ENCODE measurements at regions of chr19 and their contacts with region 1.

Region 1: GRCh38 chr19:48637170-48637947 is at the start of gene DBP:
- DNase-seq: peak; percentile 100
- H3K4me3 Mint-ChIP-seq: peak within 1 kb of the TSS; percentile 86
- H3K27ac Mint-ChIP-seq: peak within 1 kb of the TSS; percentile 99
- H3K4me1 Mint-ChIP-seq: peaks cover 35% of the 10 kb centered on the region
- H3K27me3 Mint-ChIP-seq: peaks cover 2% of the 10 kb centered on the region
- total RNA-seq, gene DBP: 10.7 and 11.2 TPM in 2 replicates

Region 2: GRCh38 chr19:48333467-48334384 is 303.6 kb before region 1 on chr19:
- intact Hi-C with region 1: loop called (anchors 5 kb)
- DNase-seq: peak; percentile 98
- H3K4me3 Mint-ChIP-seq: peak overlapping the region; percentile 91
- H3K27ac Mint-ChIP-seq: peak overlapping the region; percentile 90
- H3K4me1 Mint-ChIP-seq: peaks cover 52% of the 10 kb centered on the region
- H3K27me3 Mint-ChIP-seq: no peaks in the 10 kb centered on the region

Region 3: GRCh38 chr19:48624067-48624594 is 13.2 kb before region 1 on chr19:
- intact Hi-C with region 1: loop called (anchors 1 kb)
- DNase-seq: peak; percentile 99
- H3K4me3 Mint-ChIP-seq: peak overlapping the region; percentile 86
- H3K27ac Mint-ChIP-seq: peak overlapping the region; percentile 97
- H3K4me1 Mint-ChIP-seq: peaks cover 38% of the 10 kb centered on the region
- H3K27me3 Mint-ChIP-seq: no peaks in the 10 kb centered on the region

Region 4: GRCh38 chr19:48853483-48853882 is 216.1 kb after region 1 on chr19:
- intact Hi-C with region 1: no loop called
- DNase-seq: no peak
- H3K4me3 Mint-ChIP-seq: no peak overlapping the region
- H3K27ac Mint-ChIP-seq: no peak overlapping the region
- H3K4me1 Mint-ChIP-seq: no peaks in the 10 kb centered on the region
- H3K27me3 Mint-ChIP-seq: no peaks in the 10 kb centered on the region

Region 5: DNA sequence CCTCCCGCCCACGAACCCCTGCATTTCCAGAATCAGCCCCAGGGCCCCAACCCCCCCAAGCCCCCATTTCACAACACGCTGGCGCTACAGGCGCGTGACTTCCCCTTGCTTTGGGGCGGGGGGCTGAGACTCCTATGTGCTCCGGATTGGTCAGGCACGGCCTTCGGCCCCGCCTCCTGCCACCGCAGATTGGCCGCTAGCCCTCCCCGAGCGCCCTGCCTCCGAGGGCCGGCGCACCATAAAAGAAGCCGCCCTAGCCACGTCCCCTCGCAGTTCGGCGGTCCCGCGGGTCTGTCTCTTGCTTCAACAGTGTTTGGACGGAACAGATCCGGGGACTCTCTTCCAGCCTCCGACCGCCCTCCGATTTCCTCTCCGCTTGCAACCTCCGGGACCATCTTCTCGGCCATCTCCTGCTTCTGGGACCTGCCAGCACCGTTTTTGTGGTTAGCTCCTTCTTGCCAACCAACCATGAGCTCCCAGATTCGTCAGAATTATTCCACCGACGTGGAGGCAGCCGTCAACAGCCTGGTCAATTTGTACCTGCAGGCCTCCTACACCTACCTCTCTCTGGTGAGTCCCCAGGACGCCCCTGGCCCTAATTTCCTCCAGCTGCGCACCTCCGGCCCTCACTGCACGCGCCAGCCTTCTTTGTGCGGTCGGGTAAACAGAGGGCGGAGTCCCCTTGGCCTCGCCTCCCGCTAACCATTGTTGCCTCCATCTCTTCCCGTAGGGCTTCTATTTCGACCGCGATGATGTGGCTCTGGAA is 327.9 kb after region 1 on chr19 and contains the start of gene FTL:
- intact Hi-C with region 1: loop called (anchors 5 kb)
- DNase-seq: peak; percentile 98
- H3K4me3 Mint-ChIP-seq: peak within 1 kb of the TSS; percentile 100
- H3K27ac Mint-ChIP-seq: peak within 1 kb of the TSS; percentile 99
- H3K4me1 Mint-ChIP-seq: peaks cover 58% of the 10 kb centered on the region
- H3K27me3 Mint-ChIP-seq: no peaks in the 10 kb centered on the region
- total RNA-seq, gene FTL: 696 and 697 TPM in 2 replicates

Region 6: DNA sequence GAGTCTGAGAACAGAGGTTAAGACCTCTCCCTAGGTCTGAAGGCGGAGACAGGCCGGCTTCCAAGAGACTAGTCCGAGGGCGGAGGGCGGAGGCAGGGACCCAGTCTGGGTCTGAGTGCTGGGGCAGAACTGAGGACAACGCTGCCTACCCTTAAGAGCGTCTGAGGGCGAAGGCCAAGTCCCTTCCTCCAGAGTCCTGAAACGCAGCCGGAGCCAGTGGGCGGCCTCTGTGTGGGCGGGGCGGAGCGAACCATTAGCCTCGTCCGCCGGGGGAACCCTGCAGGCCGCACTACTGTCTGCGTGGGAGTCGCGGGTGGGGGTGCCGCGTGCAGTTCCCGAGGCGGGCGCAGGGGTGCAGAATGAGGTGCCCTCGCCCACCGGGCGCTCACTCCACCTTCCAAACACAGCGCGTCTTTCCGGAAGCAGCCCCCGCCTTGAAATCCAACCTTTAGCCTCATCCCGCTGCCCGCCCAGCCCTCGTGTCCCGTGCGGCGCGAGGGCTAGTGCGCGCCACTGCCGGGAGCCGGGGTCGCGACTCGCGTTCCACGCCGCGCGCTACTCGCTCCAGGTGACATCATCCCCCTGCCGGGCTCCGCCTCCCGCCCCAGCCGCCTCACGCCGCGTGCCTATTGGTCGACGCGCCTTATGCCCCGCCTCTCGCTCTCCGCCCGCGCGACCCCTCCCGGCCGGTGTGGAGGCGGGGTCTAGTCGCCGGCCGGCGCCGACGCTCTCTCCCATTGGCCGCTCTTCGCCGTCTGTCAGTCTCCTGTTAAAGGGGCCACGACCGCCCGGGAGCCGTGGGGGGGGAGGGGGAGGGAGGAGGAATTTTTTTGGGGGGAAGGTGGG is 481.4 kb after region 1 on chr19 and contains the start of gene C19orf73:
- intact Hi-C with region 1: loop called (anchors 10 kb)
- DNase-seq: peak; percentile 99
- H3K4me3 Mint-ChIP-seq: peak within 1 kb of the TSS; percentile 90
- H3K27ac Mint-ChIP-seq: peak within 1 kb of the TSS; percentile 90
- H3K4me1 Mint-ChIP-seq: peaks cover 25% of the 10 kb centered on the region
- H3K27me3 Mint-ChIP-seq: peaks cover 18% of the 10 kb centered on the region
- total RNA-seq, gene C19orf73: 2.0 and 2.5 TPM in 2 replicates

Region 7: GRCh38 chr19:49665351-49666119 is 1028.2 kb after region 1 on chr19 and contains the starts of genes BCL2L12 and IRF3:
- intact Hi-C with region 1: loop called (anchors 10 kb)
- DNase-seq: peak; percentile 100
- H3K4me3 Mint-ChIP-seq: peak within 1 kb of the TSS; percentile 97
- H3K27ac Mint-ChIP-seq: peak within 1 kb of the TSS; percentile 95
- H3K4me1 Mint-ChIP-seq: peaks cover 39% of the 10 kb centered on the region
- H3K27me3 Mint-ChIP-seq: no peaks in the 10 kb centered on the region
- total RNA-seq, gene BCL2L12: 69.3 and 72.0 TPM in 2 replicates
- total RNA-seq, gene IRF3: 146 and 151 TPM in 2 replicates

Measured in activated CD4-positive, alpha-beta T cell treated with anti-CD3 and anti-CD28 coated beads, Interleukin-2, amount 10 ng/mL, durations not matched to agents 24 days and 14 days (primary cell).